Ascending aorta (tissue), 2 donors: ENCODE measurements at regions of chr4 and their contacts with region 1.

Region 1: DNA sequence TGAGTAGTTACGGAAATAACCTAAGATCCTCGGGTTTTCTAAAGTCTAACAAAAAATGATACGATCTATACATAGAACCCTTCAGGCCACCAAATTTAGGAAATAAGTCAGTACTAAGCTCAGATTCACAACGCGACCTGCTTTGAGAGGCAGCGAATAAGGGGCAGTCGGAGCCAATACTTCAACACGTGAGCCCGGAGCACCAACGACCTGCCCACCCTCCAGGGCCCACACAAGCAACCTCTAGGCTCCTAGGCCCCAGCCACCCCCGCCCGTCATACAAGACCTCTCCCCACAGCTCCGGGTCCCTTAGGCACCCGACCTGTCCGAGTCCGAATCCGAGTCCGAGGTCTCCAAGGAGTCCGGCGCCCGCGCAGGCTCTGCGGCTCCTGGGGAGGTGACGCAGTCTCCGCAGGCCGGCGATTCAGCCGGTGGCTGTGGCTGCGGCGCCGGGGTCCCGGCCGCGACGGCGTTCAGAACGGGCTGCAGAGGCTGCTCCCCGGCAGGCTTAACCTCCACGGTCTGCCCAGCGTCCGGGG is 580 bp downstream of the NAF1 start:
- DNase-seq: peak; percentile 10 to 75
- H3K4me3 ChIP-seq: peak overlapping the region; percentile 65 to 85
- H3K27ac ChIP-seq: peak overlapping the region; percentile 92
- H3K4me1 ChIP-seq: peaks cover 0 to 5% of the 10 kb centered on the region in 2 donors
- H3K27me3 ChIP-seq: no peaks in the 10 kb centered on the region
- CTCF ChIP-seq: no peak

Region 2: GRCh38 chr4:162645381-162645780 is 520.7 kb before region 1 on chr4:
- intact Hi-C with region 1: loop called (anchors 5 kb)
- DNase-seq: no peak
- H3K4me3 ChIP-seq: no peak overlapping the region
- H3K27ac ChIP-seq: no peak overlapping the region
- H3K4me1 ChIP-seq: no peaks in the 10 kb centered on the region
- H3K27me3 ChIP-seq: no peaks in the 10 kb centered on the region
- CTCF ChIP-seq: peak in 2 of 3 experiments; percentile 30 to 52

Region 3: DNA sequence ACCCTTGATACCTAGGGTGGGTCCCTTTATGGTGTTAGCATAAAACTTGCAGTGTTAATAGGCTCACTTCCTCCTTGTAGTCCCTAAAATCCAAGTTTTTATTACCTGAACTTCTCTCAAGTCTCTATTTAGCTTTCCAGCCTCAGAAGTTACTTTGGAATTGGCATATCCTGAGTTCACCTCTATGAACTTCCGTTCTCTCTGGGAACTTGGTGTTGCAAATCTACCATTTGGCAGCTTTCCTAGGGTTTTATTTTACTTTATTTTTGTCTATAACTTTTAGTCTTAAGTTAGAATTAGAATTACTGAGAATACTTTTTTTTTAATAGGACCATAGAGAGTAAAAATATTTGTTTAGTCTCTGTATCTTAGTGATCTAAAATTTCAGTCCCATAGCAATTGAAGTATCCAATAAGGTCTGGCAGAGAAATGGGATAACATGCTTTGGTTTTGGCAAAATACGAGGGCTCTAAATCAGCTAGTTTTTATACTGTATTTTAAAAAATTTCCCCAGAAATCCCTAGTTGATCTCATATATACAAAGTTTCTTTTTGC is 30.9 kb after region 1 on chr4:
- intact Hi-C with region 1: loop called (anchors 2 kb)
- DNase-seq: no peak
- H3K4me3 ChIP-seq: no peak overlapping the region
- H3K27ac ChIP-seq: peak overlapping the region in 1 of 2 donors; percentile 47
- H3K4me1 ChIP-seq: peaks cover 3 to 18% of the 10 kb centered on the region in 2 donors
- H3K27me3 ChIP-seq: no peaks in the 10 kb centered on the region
- CTCF ChIP-seq: no peak

Region 4: GRCh38 chr4:163494360-163495162 is 328.5 kb after region 1 on chr4 and contains the start of gene TMA16:
- intact Hi-C with region 1: loop called (anchors 2 kb)
- DNase-seq: peak; percentile 37 to 92
- H3K4me3 ChIP-seq: peak within 1 kb of the TSS; percentile 83 to 90
- H3K27ac ChIP-seq: peak within 1 kb of the TSS; percentile 75 to 88
- H3K4me1 ChIP-seq: peaks cover 2 to 9% of the 10 kb centered on the region in 2 donors
- H3K27me3 ChIP-seq: no peaks in the 10 kb centered on the region
- CTCF ChIP-seq: no peak
- total RNA-seq, gene TMA16: 36.9 TPM